ENCODE measurements at regions of chr21 and their contacts with region 1.

Region 1: GRCh38 chr21:31185663-31186062 is 147.4 kb upstream of the KRTAP19-8 start:
- DNase-seq: peak in 5 of 9 donors; percentile 18 to 48 (median 34)
- ATAC-seq: peak; percentile 38
- H3K4me3 ChIP-seq: peak overlapping the region; percentile 76
- H3K4me3 Mint-ChIP-seq: peak overlapping the region; percentile 81 to 96 (median 94)
- H3K27ac ChIP-seq: peak overlapping the region; percentile 69
- H3K27ac Mint-ChIP-seq: peak overlapping the region; percentile 89 to 99 (median 96)
- H3K4me1 ChIP-seq: peaks cover 16 to 71% of the 10 kb centered on the region in 2 donors
- H3K4me1 Mint-ChIP-seq: peaks cover 33 to 82% (median 79%) of the 10 kb centered on the region in 7 donors
- H3K27me3 ChIP-seq: no peaks in the 10 kb centered on the region
- H3K27me3 Mint-ChIP-seq: no peaks in the 10 kb centered on the region

Region 2: GRCh38 chr21:31198575-31198974 is 12.9 kb after region 1 on chr21:
- CTCF ChIA-PET with region 1: interaction called, 14 read pairs
- POLR2A ChIA-PET with region 1: interaction called, 75 read pairs
- intact Hi-C with region 1: loop called (anchors 1 kb)
- DNase-seq: peak in 5 of 9 donors; percentile 51 to 63 (median 58)
- ATAC-seq: peak; percentile 74
- H3K4me3 ChIP-seq: no peak overlapping the region
- H3K4me3 Mint-ChIP-seq: peak overlapping the region in 3 of 10 donors; percentile 11 to 40 (median 13)
- H3K27ac ChIP-seq: no peak overlapping the region
- H3K27ac Mint-ChIP-seq: no peak overlapping the region
- H3K4me1 ChIP-seq: no peaks in the 10 kb centered on the region
- H3K4me1 Mint-ChIP-seq: peaks cover 14 to 42% (median 36%) of the 10 kb centered on the region in 7 donors
- H3K27me3 ChIP-seq: no peaks in the 10 kb centered on the region
- H3K27me3 Mint-ChIP-seq: no peaks in the 10 kb centered on the region

Region 3: DNA sequence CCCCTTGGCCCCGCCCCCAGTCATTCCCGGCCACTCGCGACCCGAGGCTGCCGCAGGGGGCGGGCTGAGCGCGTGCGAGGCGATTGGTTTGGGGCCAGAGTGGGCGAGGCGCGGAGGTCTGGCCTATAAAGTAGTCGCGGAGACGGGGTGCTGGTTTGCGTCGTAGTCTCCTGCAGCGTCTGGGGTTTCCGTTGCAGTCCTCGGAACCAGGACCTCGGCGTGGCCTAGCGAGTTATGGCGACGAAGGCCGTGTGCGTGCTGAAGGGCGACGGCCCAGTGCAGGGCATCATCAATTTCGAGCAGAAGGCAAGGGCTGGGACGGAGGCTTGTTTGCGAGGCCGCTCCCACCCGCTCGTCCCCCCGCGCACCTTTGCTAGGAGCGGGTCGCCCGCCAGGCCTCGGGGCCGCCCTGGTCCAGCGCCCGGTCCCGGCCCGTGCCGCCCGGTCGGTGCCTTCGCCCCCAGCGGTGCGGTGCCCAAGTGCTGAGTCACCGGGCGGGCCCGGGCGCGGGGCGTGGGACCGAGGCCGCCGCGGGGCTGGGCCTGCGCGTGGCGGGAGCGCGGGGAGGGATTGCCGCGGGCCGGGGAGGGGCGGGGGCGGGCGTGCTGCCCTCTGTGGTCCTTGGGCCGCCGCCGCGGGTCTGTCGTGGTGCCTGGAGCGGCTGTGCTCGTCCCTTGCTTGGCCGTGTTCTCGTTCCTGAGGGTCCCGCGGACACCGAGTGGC is 474.0 kb after region 1 on chr21 and contains the start of gene SOD1:
- CTCF ChIA-PET with region 1: interaction called, 3 read pairs
- POLR2A ChIA-PET with region 1: interaction called, 3 read pairs
- intact Hi-C with region 1: loop called (anchors 1 to 5 kb)
- DNase-seq: peak in 8 of 9 donors; percentile 20 to 98 (median 97)
- ATAC-seq: peak; percentile 97
- H3K4me3 ChIP-seq: peak within 1 kb of the TSS; percentile 79
- H3K4me3 Mint-ChIP-seq: peak within 1 kb of the TSS; percentile 95 to 100 (median 100)
- H3K27ac ChIP-seq: peak within 1 kb of the TSS; percentile 88
- H3K27ac Mint-ChIP-seq: peak within 1 kb of the TSS; percentile 97 to 100 (median 98)
- H3K4me1 ChIP-seq: peaks cover 15 to 50% of the 10 kb centered on the region in 2 donors
- H3K4me1 Mint-ChIP-seq: peaks cover 40 to 80% (median 68%) of the 10 kb centered on the region in 7 donors
- H3K27me3 ChIP-seq: no peaks in the 10 kb centered on the region
- H3K27me3 Mint-ChIP-seq: no peaks in the 10 kb centered on the region
- total RNA-seq, gene SOD1: 110 to 218 (median 182) TPM

Measured in naive thymus-derived CD4-positive, alpha-beta T cell (primary cell).